Posterior cingulate gyrus (tissue), 11 donors: ENCODE measurements at regions of chr1 and their contacts with region 1.

Region 1: GRCh38 chr1:234499119-234499942 is 20.4 kb upstream of the TARBP1 start:
- DNase-seq: peak; percentile 86 to 98 (median 94)

Region 2: GRCh38 chr1:234599617-234600417 is 100.5 kb after region 1 on chr1:
- intact Hi-C with region 1: loop called (anchors 2 kb)
- DNase-seq: peak; percentile 70 to 97 (median 78)

Region 3: DNA sequence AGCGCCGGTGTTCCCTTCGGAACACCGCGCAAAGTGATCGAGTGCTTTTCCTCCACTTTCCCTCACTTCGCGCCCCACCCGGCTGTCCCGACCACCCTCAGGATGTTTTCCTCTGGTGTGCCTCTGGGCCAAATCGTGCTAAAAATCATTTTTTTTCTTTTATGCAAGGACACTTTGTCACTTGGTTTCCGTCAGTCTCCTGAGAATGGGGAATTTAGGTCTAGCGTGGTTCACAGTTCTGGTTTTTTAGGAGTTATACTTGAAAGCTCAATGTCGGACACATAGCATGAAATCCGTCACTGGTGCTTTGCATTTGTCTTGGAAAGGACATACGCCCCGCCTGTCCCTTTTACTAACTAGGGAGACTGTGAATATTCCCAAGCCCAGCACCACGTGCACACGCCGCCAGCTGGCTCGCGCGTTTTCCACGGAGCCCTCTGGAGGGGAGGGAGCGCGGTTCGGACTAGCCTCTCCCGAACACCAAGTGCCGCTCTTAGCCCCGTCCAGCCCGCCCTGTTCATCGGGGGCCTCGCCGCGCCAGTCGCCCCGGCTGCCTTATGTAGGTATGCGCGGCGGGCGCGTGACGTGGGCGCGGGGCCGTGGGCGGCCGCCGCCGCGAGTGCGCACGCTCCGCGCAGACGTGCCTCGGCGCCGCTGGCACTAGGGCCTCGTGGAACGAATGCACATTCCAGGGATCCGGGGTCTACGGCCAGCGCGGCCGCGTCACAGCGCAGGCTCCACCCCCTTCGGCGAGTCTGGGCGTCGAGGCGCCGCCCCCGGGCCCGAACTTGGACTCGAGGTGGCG is 111.2 kb after region 1 on chr1:
- intact Hi-C with region 1: loop called (anchors 2 kb)
- DNase-seq: peak; percentile 88 to 99 (median 92)

Region 4: GRCh38 chr1:234978397-234979295 is 479.3 kb after region 1 on chr1:
- intact Hi-C with region 1: loop called (anchors 10 kb)
- DNase-seq: peak in 9 of 10 donors; percentile 55 to 95 (median 75)

Region 5: GRCh38 chr1:235079443-235080296 is 580.3 kb after region 1 on chr1:
- intact Hi-C with region 1: loop called (anchors 2 kb)
- DNase-seq: peak in 2 of 10 donors; percentile 38 to 50